Uterus (tissue), 4 donors: ENCODE measurements at regions of chr12 and their contacts with region 1.

Region 1: DNA sequence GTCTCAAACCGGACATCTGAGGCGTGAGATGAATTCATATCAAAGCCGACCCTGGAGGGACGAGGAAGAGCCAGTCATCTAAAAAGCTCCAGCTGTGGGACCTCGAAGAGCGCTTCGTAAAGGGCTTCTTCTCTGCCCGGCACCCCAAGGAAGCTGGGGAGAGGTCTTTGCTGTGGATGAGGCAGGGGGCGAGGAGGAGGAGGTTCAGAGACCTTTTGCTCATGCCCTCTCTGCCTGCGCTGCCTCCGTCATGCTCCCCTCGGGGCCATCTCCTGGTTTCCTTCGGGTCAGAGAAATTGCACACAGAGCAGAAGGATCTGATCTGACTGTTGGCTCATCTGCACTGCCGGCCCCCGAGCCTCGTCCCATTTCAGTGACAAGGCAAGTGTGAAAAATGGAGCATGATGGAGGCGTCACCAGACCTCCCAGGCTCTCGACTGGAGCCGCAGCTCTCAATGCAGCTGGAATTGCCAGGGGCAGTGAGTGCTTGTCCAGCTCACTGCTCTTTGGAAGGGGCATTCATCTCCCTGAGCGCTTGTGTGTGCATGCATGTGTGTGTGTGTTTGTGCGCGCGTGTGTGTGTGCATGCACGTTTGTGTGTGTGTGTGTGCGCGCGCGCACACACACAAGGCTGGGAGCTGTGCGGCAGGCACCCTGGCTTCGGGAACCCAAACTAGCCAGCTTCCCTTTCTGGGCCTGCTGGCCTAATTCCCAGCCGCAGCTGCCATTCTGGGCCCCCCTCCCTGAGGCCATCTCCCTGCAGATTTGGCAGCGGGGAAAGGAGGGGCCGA is 9.2 kb downstream of the CABP1 start:
- DNase-seq: peak in 1 of 2 donors; percentile 22
- H3K4me3 ChIP-seq: peak overlapping the region; percentile 32 to 33
- H3K27ac ChIP-seq: peak overlapping the region; percentile 62 to 76
- H3K4me1 ChIP-seq: no peaks in the 10 kb centered on the region
- H3K27me3 ChIP-seq: no peaks in the 10 kb centered on the region
- CTCF ChIP-seq: no peak
- POLR2A ChIP-seq: no peak

Region 2: GRCh38 chr12:120710031-120710804 is 60.6 kb after region 1 on chr12 and contains the start of gene UNC119B:
- intact Hi-C with region 1: loop called (anchors 5 kb)
- DNase-seq: peak; percentile 48 to 70
- H3K4me3 ChIP-seq: peak within 1 kb of the TSS; percentile 39 to 79
- H3K27ac ChIP-seq: peak within 1 kb of the TSS; percentile 88 to 89
- H3K4me1 ChIP-seq: peaks cover 0 to 7% of the 10 kb centered on the region in 2 donors
- H3K27me3 ChIP-seq: no peaks in the 10 kb centered on the region
- CTCF ChIP-seq: peak in 1 of 4 experiments; percentile 22
- POLR2A ChIP-seq: peak in 1 of 2 donors; percentile 43
- total RNA-seq, gene UNC119B: 13.8 to 44.8 (median 32.1) TPM

Region 3: GRCh38 chr12:120748242-120748641 is 98.6 kb after region 1 on chr12:
- intact Hi-C with region 1: no loop called
- DNase-seq: no peak
- H3K4me3 ChIP-seq: no peak overlapping the region
- H3K27ac ChIP-seq: no peak overlapping the region
- H3K4me1 ChIP-seq: no peaks in the 10 kb centered on the region
- H3K27me3 ChIP-seq: no peaks in the 10 kb centered on the region
- CTCF ChIP-seq: no peak
- POLR2A ChIP-seq: no peak

Region 4: DNA sequence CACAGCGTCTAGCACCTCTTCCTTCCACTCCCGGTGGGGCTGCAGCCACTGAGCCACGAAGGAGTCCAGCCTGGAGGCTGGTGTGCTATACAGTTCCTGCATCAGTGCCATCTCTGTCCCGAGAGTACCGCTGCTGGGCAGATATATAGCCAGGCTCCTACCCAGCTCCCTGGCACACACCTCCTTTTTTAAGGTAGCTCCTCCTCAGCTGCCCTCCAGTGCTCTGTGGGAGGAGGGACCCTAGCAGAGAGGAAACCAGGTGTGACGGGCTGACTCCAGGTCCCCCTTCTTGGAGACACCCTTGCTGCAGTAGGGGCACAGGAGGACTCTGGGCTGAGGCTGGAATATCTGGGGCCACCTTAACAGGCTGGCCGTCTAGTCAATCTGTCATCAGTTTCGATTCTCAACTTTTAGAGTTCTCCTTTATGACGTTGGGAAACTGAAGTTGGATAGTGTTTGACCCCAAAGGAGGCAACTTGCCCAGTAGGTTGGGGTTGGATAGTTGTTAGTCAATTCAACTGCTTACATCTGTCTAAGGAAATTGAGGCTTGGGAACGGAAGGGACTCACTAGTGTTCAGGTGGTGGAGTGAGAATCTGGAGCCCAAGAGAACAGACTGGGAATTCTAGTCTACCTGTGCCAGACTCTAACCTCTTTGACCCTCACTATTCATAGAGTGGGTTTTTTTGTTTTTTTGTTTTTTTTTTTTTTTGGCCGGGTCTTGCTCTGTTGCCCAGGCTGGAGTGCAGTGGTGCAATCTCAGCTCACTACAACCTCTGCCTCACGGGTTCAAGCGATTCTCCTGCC is 389.4 kb after region 1 on chr12 and contains the start of gene OASL:
- intact Hi-C with region 1: no loop called
- DNase-seq: no peak
- H3K4me3 ChIP-seq: peak within 1 kb of the TSS in 1 of 2 donors; percentile 26
- H3K27ac ChIP-seq: no peak within 1 kb of the TSS
- H3K4me1 ChIP-seq: no peaks in the 10 kb centered on the region
- H3K27me3 ChIP-seq: no peaks in the 10 kb centered on the region
- CTCF ChIP-seq: no peak
- POLR2A ChIP-seq: no peak
- total RNA-seq, gene OASL: 0.35 to 0.82 TPM in 2 of 4 donors, not detected in the others